ENCODE measurements at regions of chr4 and their contacts with region 1.

Region 1: GRCh38 chr4:17544205-17544604 is 29.2 kb downstream of the CLRN2 start:
- DNase-seq: no peak
- H3K4me3 ChIP-seq: no peak overlapping the region
- H3K27ac ChIP-seq: no peak overlapping the region
- H3K4me1 ChIP-seq: no peaks in the 10 kb centered on the region
- H3K27me3 ChIP-seq: no peaks in the 10 kb centered on the region
- CTCF ChIP-seq: no peak

Region 2: GRCh38 chr4:17347445-17347844 is 196.8 kb before region 1 on chr4:
- CTCF ChIA-PET with region 1: no interaction called
- POLR2A ChIA-PET with region 1: no interaction called
- intact Hi-C with region 1: no loop called
- DNase-seq: peak; percentile 45
- H3K4me3 ChIP-seq: no peak overlapping the region
- H3K27ac ChIP-seq: no peak overlapping the region
- H3K4me1 ChIP-seq: no peaks in the 10 kb centered on the region
- H3K27me3 ChIP-seq: no peaks in the 10 kb centered on the region
- CTCF ChIP-seq: peak; percentile 73

Region 3: DNA sequence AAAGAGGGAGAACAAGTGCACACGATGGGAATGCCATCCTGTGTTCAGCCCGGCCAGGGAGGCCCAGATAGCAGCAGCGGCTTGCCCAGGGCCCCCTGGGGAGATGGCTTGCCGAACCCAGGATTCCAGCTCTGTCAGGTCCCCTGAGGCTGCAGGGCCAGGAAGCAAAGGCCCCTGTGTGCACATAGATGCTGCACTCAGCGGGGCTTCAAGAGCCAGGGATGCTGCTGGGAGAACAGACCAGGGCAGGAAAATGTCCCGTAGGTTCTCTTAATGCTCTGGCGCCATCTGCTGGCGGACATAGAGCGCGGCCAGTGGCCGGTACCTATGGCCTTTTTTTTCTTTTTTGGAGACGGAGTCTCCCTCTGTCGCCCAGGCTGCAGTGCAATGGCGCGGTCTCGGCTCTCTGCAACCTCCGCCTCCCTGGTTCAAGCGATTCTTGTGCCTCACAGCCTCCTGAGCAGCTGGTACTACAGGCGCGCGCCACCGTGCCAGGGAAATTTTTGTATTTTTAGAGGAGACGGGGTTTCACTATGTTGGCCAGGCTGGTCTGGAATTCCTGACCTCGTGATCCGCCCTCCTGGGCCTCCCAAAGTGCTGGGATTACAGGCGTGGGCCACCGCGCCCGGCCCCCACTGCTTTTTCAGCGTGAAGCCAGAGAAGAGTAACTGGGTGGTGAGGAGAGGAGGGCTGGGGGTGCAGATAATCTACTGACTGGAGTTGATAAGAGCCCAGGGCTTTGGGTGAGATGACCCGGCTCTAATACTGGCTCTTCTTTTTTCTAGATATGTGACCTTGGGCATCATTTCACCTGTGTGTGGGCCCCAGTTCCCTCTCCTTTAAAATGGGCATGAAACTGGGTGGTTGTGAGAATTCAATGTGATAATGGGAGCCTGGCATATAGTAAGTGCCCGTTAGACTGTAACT is 92.8 kb after region 1 on chr4:
- CTCF ChIA-PET with region 1: no interaction called
- POLR2A ChIA-PET with region 1: no interaction called
- intact Hi-C with region 1: loop called (anchors 1 kb)
- DNase-seq: peak; percentile 78
- H3K4me3 ChIP-seq: no peak overlapping the region
- H3K27ac ChIP-seq: no peak overlapping the region
- H3K4me1 ChIP-seq: no peaks in the 10 kb centered on the region
- H3K27me3 ChIP-seq: no peaks in the 10 kb centered on the region
- CTCF ChIP-seq: peak; percentile 89

Region 4: DNA sequence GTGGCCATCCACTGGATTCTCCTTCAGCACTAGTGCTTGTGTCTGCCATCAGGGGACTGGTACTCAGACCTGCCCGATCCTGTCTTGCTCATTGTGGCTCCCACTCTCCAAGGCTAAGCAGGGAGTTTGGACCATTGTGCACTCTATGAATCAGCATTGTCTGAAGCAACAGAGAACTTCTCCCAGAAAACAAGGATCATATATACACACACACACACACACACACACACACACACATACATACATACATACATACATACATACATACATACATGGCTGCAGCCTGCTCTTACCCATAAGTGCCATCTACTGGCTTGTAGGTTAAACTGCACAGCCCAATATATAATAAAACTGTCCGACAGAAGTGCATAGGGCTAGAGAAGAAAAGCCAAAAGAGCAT is 822.7 kb after region 1 on chr4:
- CTCF ChIA-PET with region 1: no interaction called
- POLR2A ChIA-PET with region 1: no interaction called
- intact Hi-C with region 1: loop called (anchors 5 kb)
- DNase-seq: peak; percentile 46
- H3K4me3 ChIP-seq: no peak overlapping the region
- H3K27ac ChIP-seq: no peak overlapping the region
- H3K4me1 ChIP-seq: no peaks in the 10 kb centered on the region
- H3K27me3 ChIP-seq: no peaks in the 10 kb centered on the region
- CTCF ChIP-seq: peak; percentile 67